GM23248 (cell line): ENCODE measurements at regions of chr1 and their contacts with region 1.

Region 1: DNA sequence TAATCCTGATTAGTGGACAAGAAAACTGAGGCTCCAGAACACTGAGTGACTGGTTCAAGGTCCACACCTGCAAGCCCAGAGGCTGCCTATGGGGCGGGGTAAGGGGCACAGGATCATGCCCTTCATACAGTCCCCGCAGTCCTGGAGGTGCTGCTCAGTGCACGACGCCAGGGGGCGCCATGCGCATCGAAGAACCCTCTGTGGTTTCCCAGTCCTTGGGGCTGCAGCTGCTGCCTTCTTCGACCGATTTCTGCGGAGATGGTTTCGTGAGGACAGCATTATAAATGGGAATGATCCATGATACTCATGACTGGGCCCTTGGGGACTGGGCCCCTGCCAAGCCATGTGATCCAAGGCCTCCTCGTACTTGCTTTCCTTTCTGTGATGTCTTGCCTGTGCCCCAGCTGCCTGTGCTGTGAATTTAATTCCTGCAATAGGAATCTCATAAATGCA is 37.1 kb upstream of the ARHGEF10L start:
- DNase-seq: peak; percentile 90
- H3K4me3 ChIP-seq: no peak overlapping the region
- H3K27ac ChIP-seq: no peak overlapping the region
- H3K4me1 ChIP-seq: 0 out of 2 replicates have a peak, but pooled peaks cover 3% of the 10 kb centered on the region
- H3K27me3 ChIP-seq: no peaks in the 10 kb centered on the region

Region 2: GRCh38 chr1:16984717-16985116 is 517.6 kb before region 1 on chr1:
- in situ Hi-C with region 1: no loop called
- DNase-seq: peak; percentile 97
- H3K4me3 ChIP-seq: no peak overlapping the region
- H3K27ac ChIP-seq: peak overlapping the region; percentile 75
- H3K4me1 ChIP-seq: peaks cover 27% of the 10 kb centered on the region
- H3K27me3 ChIP-seq: no peaks in the 10 kb centered on the region

Region 3: DNA sequence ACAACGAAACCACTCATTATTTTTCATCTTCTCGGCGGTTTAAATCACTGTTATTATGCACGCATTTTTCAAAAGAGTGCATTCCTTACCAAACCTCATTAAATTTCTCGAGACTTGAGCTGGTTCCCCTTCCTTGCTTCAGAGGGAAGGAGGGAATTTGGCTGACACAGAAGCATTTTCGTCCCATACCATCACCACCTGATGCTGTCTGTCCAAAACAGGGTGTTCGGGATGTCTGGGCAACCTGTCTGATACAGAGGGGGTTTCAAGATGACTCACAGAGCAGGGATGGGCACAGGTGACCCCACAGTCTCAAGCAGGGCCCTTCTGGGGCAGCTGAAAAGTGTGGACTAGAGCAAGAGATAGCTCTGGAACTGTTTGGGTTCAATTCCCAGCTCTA is 50.6 kb before region 1 on chr1:
- in situ Hi-C with region 1: no loop called
- DNase-seq: no peak
- H3K4me3 ChIP-seq: no peak overlapping the region
- H3K27ac ChIP-seq: no peak overlapping the region
- H3K4me1 ChIP-seq: no peaks in the 10 kb centered on the region
- H3K27me3 ChIP-seq: no peaks in the 10 kb centered on the region

Region 4: DNA sequence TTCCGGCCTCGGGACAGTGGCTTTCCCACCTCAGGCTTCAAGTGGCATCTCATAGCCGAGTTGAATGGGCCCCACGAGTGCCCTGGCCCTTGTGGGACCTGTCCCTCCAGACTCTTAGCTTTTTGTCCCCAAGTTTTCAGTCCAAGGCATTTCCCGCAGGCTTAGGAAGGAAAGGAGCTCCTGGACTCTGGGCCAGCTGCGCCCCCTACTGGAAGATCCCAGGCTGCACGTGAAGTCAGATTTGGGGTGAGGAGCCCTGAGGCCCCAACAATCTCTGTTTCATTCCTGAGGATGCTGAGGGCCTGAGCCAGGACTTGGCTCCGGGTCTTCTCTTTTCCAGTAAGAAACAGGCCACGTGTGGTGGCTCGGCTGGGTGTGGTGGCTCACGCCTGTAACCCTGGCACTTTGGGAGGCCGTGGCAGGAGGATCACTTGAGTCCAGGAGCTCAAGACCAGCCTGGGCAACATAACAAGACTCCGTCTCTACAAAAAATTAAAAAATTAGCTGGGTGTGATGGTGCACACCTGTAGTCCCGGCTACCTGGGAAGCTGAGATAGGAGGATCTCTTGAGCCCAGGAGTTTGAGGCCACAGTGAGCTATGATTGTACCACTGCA is 104.6 kb after region 1 on chr1:
- in situ Hi-C with region 1: loop called (anchors 5 kb)
- DNase-seq: peak; percentile 77
- H3K4me3 ChIP-seq: no peak overlapping the region
- H3K27ac ChIP-seq: no peak overlapping the region
- H3K4me1 ChIP-seq: peaks cover 6% of the 10 kb centered on the region
- H3K27me3 ChIP-seq: no peaks in the 10 kb centered on the region

Region 5: DNA sequence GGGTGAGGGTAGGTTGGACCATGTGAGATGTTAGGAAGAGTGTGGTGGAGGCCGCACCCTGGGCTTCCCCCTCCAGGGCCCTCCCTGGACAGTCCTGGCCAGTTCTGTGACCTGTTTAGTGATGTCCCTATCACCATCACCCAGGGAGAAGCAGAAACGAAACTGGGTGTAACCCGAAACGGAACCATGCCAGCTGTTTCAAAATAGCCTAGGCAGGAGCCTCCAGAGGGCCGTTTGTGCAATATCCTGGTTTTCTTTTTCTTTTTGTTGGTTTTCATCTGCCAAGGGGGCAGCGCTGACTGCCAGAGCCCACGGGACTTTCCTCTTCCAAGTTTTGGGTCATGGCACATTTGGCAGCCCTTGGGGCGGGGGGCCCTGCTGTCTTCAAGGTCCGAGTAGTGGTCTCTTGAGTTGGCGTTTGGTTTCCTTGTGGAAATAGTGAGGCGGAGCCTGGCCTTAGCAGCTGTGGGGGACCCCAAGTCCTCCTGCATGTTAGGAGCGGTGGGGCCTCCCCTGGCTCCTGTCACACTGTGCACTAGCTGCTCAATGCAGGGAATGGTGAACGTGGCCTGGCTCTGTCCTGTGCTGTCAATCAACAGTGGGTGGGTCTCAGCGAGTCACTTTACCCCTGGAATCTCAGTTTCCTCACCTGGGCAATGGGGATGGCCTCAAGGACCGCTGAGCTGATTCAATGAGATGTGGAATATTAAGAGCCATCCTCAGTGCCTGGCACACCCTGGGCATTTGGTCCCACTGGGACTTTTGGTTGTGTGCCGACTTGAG is 127.9 kb after region 1 on chr1:
- in situ Hi-C with region 1: no loop called
- DNase-seq: peak; percentile 82
- H3K4me3 ChIP-seq: no peak overlapping the region
- H3K27ac ChIP-seq: peak overlapping the region; percentile 50
- H3K4me1 ChIP-seq: peaks cover 26% of the 10 kb centered on the region
- H3K27me3 ChIP-seq: no peaks in the 10 kb centered on the region

Region 6: GRCh38 chr1:18100491-18101063 is 598.2 kb after region 1 on chr1:
- in situ Hi-C with region 1: loop called (anchors 25 kb)
- DNase-seq: peak; percentile 77
- H3K4me3 ChIP-seq: no peak overlapping the region
- H3K27ac ChIP-seq: no peak overlapping the region
- H3K4me1 ChIP-seq: no peaks in the 10 kb centered on the region
- H3K27me3 ChIP-seq: peaks cover 6% of the 10 kb centered on the region; the same call in 1 of the 2 replicates